ENCODE measurements at regions of chr7 and their contacts with region 1.

Region 1: DNA sequence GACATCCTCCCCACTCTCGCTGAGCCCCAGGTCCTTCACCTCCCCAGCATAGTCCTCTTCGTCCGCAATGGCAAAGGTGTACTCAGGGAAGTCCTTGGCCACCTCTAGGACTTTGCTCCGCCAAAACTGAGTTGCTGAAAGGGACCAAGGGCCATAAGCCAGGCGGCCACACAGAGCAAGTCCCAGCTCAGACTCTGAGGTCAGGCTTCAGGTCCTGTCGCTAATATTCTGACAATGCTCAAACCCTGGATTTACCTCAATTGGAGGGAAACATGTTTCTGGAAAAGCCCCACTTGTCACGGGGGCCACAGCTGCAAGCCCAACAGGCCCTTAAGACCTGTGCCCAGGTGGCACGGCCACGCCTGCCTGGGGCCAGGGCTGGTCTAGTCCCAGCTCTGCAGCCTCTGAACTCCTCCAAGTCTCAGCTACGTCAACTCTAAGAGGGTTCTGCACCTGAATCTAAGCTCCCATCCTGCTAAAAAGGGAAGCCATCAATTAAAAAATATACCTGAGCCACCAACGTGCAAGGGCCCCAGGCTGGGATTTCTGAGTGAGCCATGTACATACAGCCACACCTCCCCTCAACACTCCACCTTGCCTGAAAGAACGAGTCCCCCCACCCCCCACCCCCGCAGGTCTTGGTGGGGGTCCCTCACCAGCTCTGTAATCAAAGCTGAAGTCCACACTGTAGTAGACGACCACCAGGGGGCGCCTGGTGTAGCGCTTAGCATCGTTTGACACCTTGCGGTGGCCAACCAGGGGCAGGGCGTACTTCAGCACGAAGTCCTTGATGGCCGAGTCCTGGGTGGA is 22.9 kb downstream of the PDIA4 start:
- DNase-seq: peak; percentile 56 to 94
- H3K4me3 ChIP-seq: no peak overlapping the region
- H3K27ac ChIP-seq: 0 out of 2 replicates have a peak overlapping the region, but pooled peaks have one; percentile 12
- H3K4me1 ChIP-seq: no peaks in the 10 kb centered on the region; a peak in 2 of 7 replicates
- H3K27me3 ChIP-seq: no peaks in the 10 kb centered on the region
- CTCF ChIP-seq: peak; percentile 81 to 95 (median 86)
- EP300 ChIP-seq: peak in 1 of 2 experiments; percentile 12; a peak in 1 of 3 replicates
- POLR2A ChIP-seq: no peak
- RAD21 ChIP-seq: peak; percentile 59 to 72

Region 2: GRCh38 chr7:148954766-148955165 is 50.7 kb before region 1 on chr7:
- CTCF ChIA-PET with region 1: no interaction called
- POLR2A ChIA-PET with region 1: no interaction called
- DNase-seq: no peak
- H3K4me3 ChIP-seq: no peak overlapping the region
- H3K27ac ChIP-seq: no peak overlapping the region
- H3K4me1 ChIP-seq: no peaks in the 10 kb centered on the region
- H3K27me3 ChIP-seq: no peaks in the 10 kb centered on the region
- CTCF ChIP-seq: no peak
- EP300 ChIP-seq: no peak
- POLR2A ChIP-seq: no peak
- RAD21 ChIP-seq: no peak

Region 3: DNA sequence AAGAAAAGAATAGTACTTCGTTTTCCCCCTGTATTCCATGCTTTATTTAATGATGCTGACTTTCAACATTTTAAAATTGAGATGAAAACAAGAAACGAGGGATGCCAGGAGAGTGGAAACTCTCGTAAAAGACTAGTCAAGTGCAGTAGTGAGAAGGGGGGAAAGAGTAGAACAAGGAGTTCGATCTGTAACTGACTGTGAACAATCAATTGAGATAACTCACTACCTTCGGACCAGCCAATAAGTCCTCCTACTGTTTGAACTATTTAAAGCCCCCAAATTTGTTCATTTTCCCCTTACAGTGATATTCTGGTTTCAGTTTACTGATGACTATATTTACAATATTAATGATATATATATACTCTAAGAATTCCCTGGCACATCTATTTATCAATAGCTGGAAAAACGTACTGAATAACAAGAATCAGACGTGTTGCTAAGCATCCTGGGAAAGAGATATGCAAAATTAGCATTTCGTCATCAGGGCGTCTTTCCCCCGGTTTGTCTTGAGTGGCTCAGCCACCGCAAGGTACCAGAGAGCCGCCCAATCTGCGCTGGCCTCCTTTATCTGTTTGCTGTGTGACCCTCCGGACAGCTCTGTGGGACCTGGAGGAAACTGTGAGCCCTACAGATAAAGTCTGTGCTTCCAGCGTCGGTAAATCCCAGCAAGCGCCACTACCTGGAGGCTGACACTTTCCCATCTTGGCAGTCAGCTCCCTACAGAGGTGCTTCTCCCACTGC is 18.3 kb before region 1 on chr7:
- CTCF ChIA-PET with region 1: interaction called, 56 read pairs
- POLR2A ChIA-PET with region 1: interaction called, 5 read pairs
- DNase-seq: peak; percentile 81 to 90
- H3K4me3 ChIP-seq: peak overlapping the region; percentile 59 to 81 (median 70)
- H3K27ac ChIP-seq: peak overlapping the region; percentile 58
- H3K4me1 ChIP-seq: peaks cover 0 to 10% (median 4%) of the 10 kb centered on the region in 4 experiments; a peak in 5 of 7 replicates
- H3K27me3 ChIP-seq: no peaks in the 10 kb centered on the region
- CTCF ChIP-seq: no peak
- EP300 ChIP-seq: no peak
- POLR2A ChIP-seq: peak; percentile 30 to 72
- RAD21 ChIP-seq: no peak

Region 4: DNA sequence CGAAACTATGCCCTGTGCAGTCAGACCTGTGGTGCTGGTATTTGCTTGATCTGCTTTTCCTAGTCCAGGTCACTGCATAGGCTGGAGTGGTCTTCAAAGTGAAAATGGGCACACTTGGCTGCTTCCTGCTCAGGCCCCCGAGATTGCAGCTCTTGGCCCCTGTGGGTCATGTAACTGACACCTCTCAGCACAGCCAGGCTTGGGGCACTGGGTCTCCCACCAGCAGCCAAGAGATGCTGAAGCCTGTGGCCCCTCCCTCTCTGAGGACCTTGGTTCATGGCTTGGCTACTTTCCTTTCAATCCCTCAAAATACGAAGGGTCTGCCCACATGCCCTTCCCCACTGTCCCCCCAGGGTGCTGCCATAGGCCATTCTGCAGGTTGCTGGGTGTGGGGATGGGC is 10.8 kb before region 1 on chr7:
- CTCF ChIA-PET with region 1: interaction called, 56 read pairs
- POLR2A ChIA-PET with region 1: interaction called, 5 read pairs
- DNase-seq: no peak
- H3K4me3 ChIP-seq: no peak overlapping the region
- H3K27ac ChIP-seq: no peak overlapping the region
- H3K4me1 ChIP-seq: no peaks in the 10 kb centered on the region; a peak in 1 of 7 replicates
- H3K27me3 ChIP-seq: no peaks in the 10 kb centered on the region
- CTCF ChIP-seq: no peak
- EP300 ChIP-seq: no peak
- POLR2A ChIP-seq: no peak
- RAD21 ChIP-seq: no peak

Region 5: DNA sequence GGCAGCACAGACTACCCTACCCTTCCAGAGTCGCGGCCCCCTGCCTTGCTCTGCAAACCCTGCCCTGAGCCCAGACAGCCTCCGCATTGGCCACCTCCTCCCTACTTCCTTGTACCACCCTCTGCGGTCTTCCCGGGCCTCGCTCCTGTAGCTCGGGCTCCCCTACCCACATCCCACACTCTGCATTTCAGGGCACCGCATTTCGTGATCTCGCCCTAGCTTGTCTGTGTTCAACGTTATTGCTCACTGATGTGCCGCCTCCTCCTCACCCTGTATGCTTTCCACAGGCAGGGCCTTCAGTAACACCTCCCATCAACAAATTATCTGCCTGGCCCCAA is 16.2 kb after region 1 on chr7:
- CTCF ChIA-PET with region 1: interaction called, 44 read pairs
- POLR2A ChIA-PET with region 1: interaction called, 3 read pairs
- DNase-seq: no peak
- H3K4me3 ChIP-seq: no peak overlapping the region
- H3K27ac ChIP-seq: no peak overlapping the region
- H3K4me1 ChIP-seq: peaks cover 4 to 16% (median 9%) of the 10 kb centered on the region in 4 experiments
- H3K27me3 ChIP-seq: no peaks in the 10 kb centered on the region
- CTCF ChIP-seq: no peak
- EP300 ChIP-seq: no peak
- POLR2A ChIP-seq: no peak
- RAD21 ChIP-seq: no peak